MCF 10A (cell line): ENCODE measurements at regions of chr1 and their contacts with region 1.

Region 1: GRCh38 chr1:45686317-45687013 is at the start of gene GPBP1L1:
- DNase-seq: peak; percentile 97
- H3K4me3 Mint-ChIP-seq: peak within 1 kb of the TSS; percentile 91
- H3K27ac Mint-ChIP-seq: peak within 1 kb of the TSS; percentile 100
- H3K4me1 Mint-ChIP-seq: peaks cover 19% of the 10 kb centered on the region
- H3K27me3 Mint-ChIP-seq: no peaks in the 10 kb centered on the region
- CTCF ChIP-seq: no peak
- total RNA-seq, gene GPBP1L1: 105 and 116 TPM in 2 replicates

Region 2: DNA sequence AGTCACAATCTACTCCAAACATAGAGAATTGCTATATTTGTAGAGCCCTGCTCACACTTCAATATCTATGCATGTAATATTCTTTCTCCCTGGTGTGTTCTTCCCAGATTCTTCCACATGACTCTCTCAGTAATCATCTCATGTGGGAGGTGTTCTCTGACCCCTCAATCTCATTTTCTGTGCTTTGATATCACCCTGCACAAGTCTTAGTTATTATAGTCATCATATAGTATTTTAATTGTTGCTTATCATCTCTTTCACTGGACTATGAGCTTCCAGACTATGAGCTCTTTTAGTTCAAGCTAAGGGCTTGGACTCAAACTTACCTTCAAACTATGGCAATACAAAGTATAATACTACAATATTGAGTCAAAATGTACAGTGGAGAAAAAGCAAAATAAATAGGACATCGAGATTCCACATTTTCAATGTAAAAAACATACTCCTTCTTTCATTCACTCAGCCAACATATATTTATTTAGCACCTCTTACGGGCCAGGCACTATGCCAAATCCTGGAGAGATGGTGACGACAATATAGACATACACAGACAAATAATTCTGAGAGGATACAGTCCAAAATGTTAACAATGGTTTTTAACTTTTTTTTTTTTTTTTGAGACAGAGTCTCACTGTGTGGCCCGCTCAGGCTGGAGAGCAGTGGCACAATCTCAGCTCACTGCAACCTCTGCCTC is 208.2 kb before region 1 on chr1:
- CTCF ChIA-PET with region 1: no interaction called
- POLR2A ChIA-PET with region 1: no interaction called
- intact Hi-C with region 1: no loop called
- DNase-seq: no peak
- H3K4me3 Mint-ChIP-seq: no peak overlapping the region
- H3K27ac Mint-ChIP-seq: no peak overlapping the region
- H3K4me1 Mint-ChIP-seq: no peaks in the 10 kb centered on the region
- H3K27me3 Mint-ChIP-seq: no peaks in the 10 kb centered on the region
- CTCF ChIP-seq: no peak

Region 3: DNA sequence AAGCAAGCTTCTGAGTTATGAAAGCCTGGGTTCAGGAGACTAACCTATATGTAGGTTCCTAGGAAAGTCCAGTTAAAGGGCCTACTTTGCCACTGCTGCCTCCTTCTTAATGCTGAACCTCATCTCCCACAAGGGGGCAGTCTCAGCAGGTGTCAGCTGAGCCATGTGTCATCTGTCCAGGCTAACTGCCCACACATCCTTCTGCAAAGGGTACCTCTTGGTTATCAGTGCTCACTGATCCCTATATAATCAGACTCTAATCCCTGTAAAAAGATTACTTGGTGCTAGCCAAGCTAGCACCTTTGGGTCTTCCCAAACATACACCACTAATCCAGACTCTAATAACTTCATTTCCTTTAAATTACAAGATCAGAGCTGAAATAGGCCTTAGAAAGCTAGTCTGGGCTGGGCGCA is 173.8 kb before region 1 on chr1:
- CTCF ChIA-PET with region 1: interaction called, 3 read pairs
- POLR2A ChIA-PET with region 1: no interaction called
- intact Hi-C with region 1: loop called (anchors 10 kb)
- DNase-seq: peak; percentile 82
- H3K4me3 Mint-ChIP-seq: no peak overlapping the region
- H3K27ac Mint-ChIP-seq: no peak overlapping the region
- H3K4me1 Mint-ChIP-seq: no peaks in the 10 kb centered on the region
- H3K27me3 Mint-ChIP-seq: no peaks in the 10 kb centered on the region
- CTCF ChIP-seq: peak; percentile 67

Region 4: DNA sequence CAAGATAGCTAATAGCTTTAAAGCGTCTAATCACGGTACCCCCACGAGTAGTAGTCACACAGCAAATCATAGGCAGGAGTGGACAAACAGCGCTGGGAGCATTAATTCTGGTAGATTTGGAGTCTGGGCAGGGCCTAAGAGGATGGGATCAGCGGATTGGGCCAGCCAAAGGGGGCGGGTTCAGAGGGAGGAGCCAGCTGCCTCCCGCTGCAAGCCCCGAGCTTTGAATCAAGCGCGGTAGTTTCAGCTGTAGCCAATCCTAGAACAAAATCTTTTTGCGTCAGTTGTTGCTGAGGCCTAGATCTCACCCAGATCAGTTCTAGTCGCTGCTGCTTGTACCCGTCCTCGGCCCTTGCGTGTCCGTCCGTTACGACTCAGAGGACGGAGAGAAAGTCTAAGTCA is 103.2 kb before region 1 on chr1:
- CTCF ChIA-PET with region 1: no interaction called
- POLR2A ChIA-PET with region 1: interaction called, 14 read pairs
- intact Hi-C with region 1: no loop called
- DNase-seq: peak; percentile 97
- H3K4me3 Mint-ChIP-seq: peak overlapping the region; percentile 89
- H3K27ac Mint-ChIP-seq: peak overlapping the region; percentile 68
- H3K4me1 Mint-ChIP-seq: peaks cover 15% of the 10 kb centered on the region
- H3K27me3 Mint-ChIP-seq: no peaks in the 10 kb centered on the region
- CTCF ChIP-seq: no peak

Region 5: GRCh38 chr1:45654540-45655280 is 31.8 kb before region 1 on chr1:
- CTCF ChIA-PET with region 1: interaction called, 3 read pairs
- POLR2A ChIA-PET with region 1: interaction called, 36 read pairs
- intact Hi-C with region 1: no loop called
- DNase-seq: peak; percentile 46
- H3K4me3 Mint-ChIP-seq: no peak overlapping the region
- H3K27ac Mint-ChIP-seq: peak overlapping the region; percentile 8
- H3K4me1 Mint-ChIP-seq: peaks cover 14% of the 10 kb centered on the region
- H3K27me3 Mint-ChIP-seq: no peaks in the 10 kb centered on the region
- CTCF ChIP-seq: no peak

Region 6: GRCh38 chr1:45704637-45705036 is 18.2 kb after region 1 on chr1:
- CTCF ChIA-PET with region 1: no interaction called
- POLR2A ChIA-PET with region 1: interaction called, 33 read pairs
- intact Hi-C with region 1: no loop called
- DNase-seq: no peak
- H3K4me3 Mint-ChIP-seq: no peak overlapping the region
- H3K27ac Mint-ChIP-seq: no peak overlapping the region
- H3K4me1 Mint-ChIP-seq: no peaks in the 10 kb centered on the region
- H3K27me3 Mint-ChIP-seq: no peaks in the 10 kb centered on the region
- CTCF ChIP-seq: no peak

Region 7: DNA sequence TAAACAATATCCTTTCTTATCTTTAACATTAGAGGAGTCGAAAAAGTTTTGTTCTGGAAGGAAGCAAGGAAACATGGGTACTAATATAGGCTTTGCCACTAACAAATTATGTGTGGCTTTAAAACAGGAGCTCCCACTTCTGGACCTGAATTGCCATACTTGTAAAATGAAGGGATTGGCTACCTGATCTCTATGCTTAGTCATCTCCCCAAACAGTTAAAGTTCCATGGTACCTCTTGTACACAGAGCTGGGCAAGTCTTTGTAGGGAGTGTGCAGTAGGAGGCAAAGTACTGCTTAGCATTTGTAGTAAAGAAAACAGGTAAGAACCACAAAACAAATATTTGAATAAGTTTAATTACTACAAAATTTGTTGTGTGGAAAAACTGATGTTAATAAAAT is 198.2 kb after region 1 on chr1:
- CTCF ChIA-PET with region 1: no interaction called
- POLR2A ChIA-PET with region 1: interaction called, 11 read pairs
- intact Hi-C with region 1: loop called (anchors 2 kb)
- DNase-seq: peak; percentile 22
- H3K4me3 Mint-ChIP-seq: no peak overlapping the region
- H3K27ac Mint-ChIP-seq: peak overlapping the region; percentile 12
- H3K4me1 Mint-ChIP-seq: peaks cover 17% of the 10 kb centered on the region
- H3K27me3 Mint-ChIP-seq: no peaks in the 10 kb centered on the region
- CTCF ChIP-seq: no peak